Right cardiac atrium (tissue), 5 donors: ENCODE measurements at regions of chr2 and their contacts with region 1.

Region 1: DNA sequence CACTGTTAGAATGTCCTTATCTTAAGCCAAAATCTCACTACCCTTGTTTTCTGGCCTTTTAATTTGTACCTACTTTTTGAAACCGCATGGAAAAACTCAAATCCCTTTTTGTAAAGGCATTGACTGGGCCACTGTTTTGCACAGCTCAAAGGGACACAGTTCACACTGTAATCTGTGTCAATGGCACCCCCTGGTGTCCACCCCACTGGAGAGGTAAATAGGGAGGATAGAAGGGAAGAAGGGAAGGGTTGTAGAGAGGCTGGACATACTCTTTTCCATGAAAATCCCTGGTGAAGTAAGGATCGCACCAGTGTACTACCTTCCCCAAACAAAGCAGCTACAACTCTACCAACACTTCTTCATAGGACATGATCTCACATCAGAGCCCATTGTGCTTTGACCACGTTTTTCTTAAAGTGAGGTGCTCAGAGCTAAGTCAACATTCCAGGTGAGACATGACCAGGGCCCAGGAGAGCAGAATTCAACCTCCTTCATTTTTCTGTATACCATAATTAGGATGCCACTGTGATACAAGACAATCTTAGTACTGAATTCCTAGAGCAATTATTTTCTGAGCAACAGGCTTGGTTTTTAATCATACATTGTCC is 92.4 kb upstream of the RMDN2 start:
- DNase-seq: peak; percentile 89 to 95 (median 92)
- ATAC-seq: peak; percentile 87
- H3K4me3 ChIP-seq: no peak overlapping the region
- H3K27ac ChIP-seq: no peak overlapping the region
- H3K4me1 ChIP-seq: peaks cover 7% of the 10 kb centered on the region
- H3K27me3 ChIP-seq: no peaks in the 10 kb centered on the region

Region 2: DNA sequence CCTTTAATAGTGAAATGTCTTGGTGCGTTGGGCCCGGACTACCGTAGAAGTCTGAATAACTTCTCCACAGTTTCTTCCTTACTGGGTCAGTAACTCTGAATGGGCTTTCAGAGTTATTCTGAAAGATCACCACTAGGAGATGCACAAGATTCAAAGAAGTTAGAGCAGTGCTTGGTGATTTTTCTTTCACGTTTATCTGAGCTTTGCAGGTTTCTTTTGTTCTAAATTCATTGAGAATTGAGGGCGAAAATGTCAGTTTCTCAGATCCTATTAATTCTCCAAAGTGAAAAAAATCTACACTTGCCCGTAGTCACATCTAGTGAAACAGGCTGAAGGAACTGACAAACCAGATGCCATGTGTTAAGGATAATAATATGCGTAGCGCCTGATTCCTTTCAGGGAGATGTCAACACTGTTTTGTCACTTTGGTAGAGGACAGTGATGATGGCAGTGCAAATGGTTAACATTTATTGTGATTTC is 418.2 kb before region 1 on chr2:
- intact Hi-C with region 1: loop called (anchors 2 to 5 kb)
- DNase-seq: no peak
- ATAC-seq: peak; percentile 75 to 85
- H3K4me3 ChIP-seq: no peak overlapping the region
- H3K27ac ChIP-seq: no peak overlapping the region
- H3K4me1 ChIP-seq: peaks cover 2% of the 10 kb centered on the region
- H3K27me3 ChIP-seq: no peaks in the 10 kb centered on the region

Region 3: DNA sequence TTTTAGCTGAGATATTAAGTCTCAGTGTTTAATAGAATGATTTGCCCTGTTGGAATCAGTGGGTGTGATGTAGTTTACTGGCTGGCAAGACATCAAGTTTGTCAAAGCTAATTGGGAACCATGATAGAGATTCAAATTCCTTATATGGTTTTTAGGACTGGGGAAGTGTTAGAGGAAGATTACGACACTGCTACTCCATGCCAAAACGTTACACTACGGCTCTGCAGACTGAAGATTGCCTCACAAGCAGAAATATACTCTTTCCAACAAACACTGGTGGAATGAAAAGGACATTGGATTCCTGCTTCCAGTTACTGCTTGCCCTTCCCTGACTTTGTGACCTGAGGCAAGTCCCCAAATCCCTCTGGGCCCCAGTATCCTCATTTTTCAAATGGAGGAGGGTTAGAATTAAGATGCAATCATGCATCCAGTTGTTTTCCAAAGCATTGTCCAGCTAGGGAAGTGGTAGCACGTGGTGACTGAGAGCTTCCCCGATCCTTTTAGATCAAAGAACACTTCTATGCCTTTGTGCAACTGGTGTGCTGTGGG is 308.8 kb before region 1 on chr2:
- intact Hi-C with region 1: loop called in 1 of 4 experiments (anchors 10 kb)
- DNase-seq: peak; percentile 25 to 46 (median 29)
- ATAC-seq: peak; percentile 98
- H3K4me3 ChIP-seq: no peak overlapping the region
- H3K27ac ChIP-seq: peak overlapping the region; percentile 54
- H3K4me1 ChIP-seq: peaks cover 3% of the 10 kb centered on the region
- H3K27me3 ChIP-seq: no peaks in the 10 kb centered on the region

Region 4: GRCh38 chr2:37672104-37672869 is 160.4 kb before region 1 on chr2:
- intact Hi-C with region 1: loop called in 1 of 4 experiments (anchors 10 kb)
- DNase-seq: peak; percentile 83 to 90 (median 88)
- ATAC-seq: peak; percentile 68 to 93
- H3K4me3 ChIP-seq: peak overlapping the region; percentile 61
- H3K27ac ChIP-seq: peak overlapping the region; percentile 98
- H3K4me1 ChIP-seq: peaks cover 2% of the 10 kb centered on the region
- H3K27me3 ChIP-seq: no peaks in the 10 kb centered on the region

Region 5: DNA sequence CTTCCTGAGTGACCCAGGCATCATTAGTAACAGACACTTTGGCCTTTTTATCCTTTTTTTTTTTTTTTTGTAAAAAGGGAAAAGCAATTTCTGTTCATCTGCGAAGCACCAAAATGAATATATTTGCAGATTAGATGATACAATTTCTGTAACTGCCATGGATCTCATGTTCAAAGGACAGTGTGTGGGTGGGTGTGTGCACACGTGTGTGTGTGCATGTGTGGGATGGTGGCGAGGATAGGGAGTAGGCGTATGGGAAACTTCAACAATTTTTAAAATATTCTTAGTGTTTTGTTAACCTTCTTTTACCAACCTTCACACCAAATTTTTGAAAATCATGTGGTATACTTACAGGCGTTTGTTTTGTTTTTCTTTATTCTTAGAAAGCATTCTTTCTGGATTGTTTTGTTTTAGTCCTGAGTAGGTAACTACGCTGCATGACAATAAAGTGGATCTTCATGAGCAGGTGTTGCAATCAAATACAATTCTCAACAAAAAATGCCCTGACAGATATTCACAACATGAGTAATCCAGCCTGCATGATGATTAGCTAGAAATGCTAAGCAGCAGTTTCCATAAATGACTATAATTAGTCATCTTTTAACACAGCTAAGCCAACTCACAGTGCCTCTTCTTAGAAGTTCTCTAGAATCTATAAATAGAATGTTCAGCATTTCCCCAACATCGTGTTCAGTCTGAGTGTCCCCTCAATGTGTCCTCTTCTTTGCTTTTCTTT is 38.9 kb after region 1 on chr2:
- intact Hi-C with region 1: loop called in 3 of 4 experiments (anchors 5 kb)
- DNase-seq: no peak
- ATAC-seq: no peak
- H3K4me3 ChIP-seq: no peak overlapping the region
- H3K27ac ChIP-seq: no peak overlapping the region
- H3K4me1 ChIP-seq: peaks cover 24% of the 10 kb centered on the region
- H3K27me3 ChIP-seq: no peaks in the 10 kb centered on the region

Region 6: DNA sequence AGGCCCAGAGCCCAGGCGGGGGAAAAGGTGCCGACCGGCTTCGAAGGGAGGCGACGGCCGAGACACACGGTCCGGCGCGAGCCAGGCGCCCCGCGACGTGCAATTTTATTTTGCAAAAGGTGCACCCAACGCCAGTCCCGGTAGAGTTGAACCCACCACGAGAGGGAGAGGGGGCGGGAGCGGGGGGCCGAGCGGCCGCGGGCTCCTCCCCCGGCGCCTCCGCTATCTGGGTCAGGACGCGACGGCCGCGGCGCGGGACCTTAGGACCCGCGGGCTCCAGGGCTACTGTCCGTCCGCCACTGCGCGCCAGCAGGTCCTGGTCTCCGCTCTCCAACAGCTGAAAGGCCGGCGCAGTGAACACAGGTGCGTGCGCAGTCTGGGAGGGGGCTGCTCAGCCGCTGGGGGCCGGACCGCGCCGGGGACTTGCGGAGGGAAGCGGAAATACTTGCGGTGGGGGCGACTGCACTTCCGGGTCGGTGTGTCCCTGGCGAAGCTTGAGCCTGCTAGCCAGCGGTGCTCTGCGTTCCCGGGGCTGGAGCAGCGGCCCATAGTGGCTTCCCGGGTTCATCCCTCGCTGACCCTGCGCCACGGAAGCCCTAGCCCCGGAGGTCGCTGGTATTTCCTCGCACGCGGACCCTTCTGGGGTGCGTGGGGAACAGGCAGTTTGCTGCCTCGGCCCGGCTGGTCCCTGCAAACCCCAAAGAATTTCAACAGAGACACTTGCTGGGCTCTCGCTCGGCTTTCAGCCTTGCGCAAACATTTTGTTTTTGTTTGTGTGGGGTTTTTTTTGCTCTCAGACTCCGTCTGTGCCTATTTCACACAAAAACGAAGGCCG is 92.6 kb after region 1 on chr2 and contains the start of gene RMDN2:
- intact Hi-C with region 1: no loop called
- DNase-seq: peak; percentile 93 to 97 (median 97)
- ATAC-seq: peak; percentile 98
- H3K4me3 ChIP-seq: peak within 1 kb of the TSS; percentile 70
- H3K27ac ChIP-seq: peak within 1 kb of the TSS; percentile 96
- H3K4me1 ChIP-seq: peaks cover 3% of the 10 kb centered on the region
- H3K27me3 ChIP-seq: no peaks in the 10 kb centered on the region
- total RNA-seq, gene RMDN2: 7.3 to 9.0 (median 8.2) TPM